ENCODE measurements at regions of chr11 and their contacts with region 1.

Region 1: DNA sequence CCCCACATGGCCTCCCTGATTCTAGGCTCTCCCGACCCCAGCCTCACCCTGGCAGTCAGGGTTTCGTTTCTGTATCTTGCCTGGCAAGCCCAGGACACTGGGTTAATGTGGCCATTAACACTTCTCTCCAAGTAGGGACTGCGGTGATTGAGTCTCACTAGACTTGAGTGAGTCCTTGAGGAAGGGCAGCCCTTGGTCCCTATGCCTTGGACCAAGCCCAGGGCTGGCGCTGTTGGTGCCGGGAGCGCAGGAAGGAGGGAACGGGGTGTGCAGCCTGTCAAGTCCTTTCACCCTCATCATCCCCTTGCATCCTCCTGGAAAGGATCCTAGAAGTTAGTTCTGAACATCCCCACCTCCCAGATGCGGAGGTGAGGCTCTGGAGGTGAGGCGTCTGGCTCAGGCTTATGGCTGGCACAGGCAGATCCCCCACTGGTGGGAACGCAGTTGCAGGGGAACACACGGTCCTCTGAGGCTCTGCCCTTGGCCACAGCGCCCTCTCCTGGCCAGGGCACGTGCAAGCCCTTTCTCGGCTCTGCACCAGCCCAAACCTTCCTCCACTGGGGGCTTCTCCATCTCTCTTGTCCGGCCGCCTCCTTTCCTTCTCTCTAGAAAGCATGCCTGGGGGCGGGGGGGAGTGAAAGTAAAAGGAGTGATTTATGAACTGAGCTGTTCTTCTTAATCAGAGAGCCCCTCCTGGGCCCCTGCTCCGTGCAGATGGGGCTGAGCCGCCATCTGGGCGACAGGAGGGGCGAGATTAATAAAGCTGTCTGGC is 56.7 kb downstream of the TP53I11 start:
- DNase-seq: peak; percentile 86
- H3K4me3 Mint-ChIP-seq: no peak overlapping the region
- H3K27ac Mint-ChIP-seq: no peak overlapping the region
- H3K4me1 Mint-ChIP-seq: no peaks in the 10 kb centered on the region
- H3K27me3 Mint-ChIP-seq: no peaks in the 10 kb centered on the region

Region 2: DNA sequence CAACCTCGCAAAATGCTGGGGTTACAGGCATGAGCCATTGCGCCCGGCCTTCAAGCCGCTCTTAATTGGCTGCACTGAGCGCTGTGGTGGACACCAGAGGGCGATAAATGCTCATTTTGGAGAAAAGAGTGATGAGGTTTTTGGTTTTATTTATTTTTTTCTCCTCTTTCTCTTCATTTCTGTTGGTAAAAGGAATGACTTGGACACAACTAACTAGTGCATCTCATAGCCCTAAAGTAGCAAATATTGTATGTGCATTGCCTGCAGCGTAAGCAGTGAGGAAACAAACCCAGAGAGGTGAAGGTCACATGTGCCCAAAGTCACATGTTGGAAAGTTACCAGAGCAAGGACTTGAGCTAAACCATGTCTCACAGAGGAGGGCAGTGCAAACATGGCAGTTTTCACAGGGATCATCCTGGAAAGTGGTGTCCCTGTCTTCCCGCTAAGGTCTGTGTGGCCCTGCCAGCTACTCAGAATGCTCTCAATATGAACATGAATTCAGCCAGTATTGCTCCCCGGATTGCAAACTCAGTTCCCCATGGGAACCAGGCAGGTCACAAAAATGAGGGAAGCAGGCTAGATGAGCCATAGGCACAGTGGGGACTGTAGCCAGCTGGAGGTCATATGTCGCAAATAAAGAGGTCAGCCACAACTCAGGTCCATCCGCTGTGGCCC is 337.2 kb before region 1 on chr11:
- intact Hi-C with region 1: loop called (anchors 5 kb)
- DNase-seq: peak; percentile 90
- H3K4me3 Mint-ChIP-seq: no peak overlapping the region
- H3K27ac Mint-ChIP-seq: peak overlapping the region; percentile 68
- H3K4me1 Mint-ChIP-seq: peaks cover 25% of the 10 kb centered on the region
- H3K27me3 Mint-ChIP-seq: peaks cover 4% of the 10 kb centered on the region

Region 3: GRCh38 chr11:44621140-44621681 is 272.8 kb before region 1 on chr11:
- intact Hi-C with region 1: loop called (anchors 5 kb)
- DNase-seq: peak; percentile 88
- H3K4me3 Mint-ChIP-seq: no peak overlapping the region
- H3K27ac Mint-ChIP-seq: no peak overlapping the region
- H3K4me1 Mint-ChIP-seq: peaks cover 27% of the 10 kb centered on the region
- H3K27me3 Mint-ChIP-seq: no peaks in the 10 kb centered on the region

Region 4: DNA sequence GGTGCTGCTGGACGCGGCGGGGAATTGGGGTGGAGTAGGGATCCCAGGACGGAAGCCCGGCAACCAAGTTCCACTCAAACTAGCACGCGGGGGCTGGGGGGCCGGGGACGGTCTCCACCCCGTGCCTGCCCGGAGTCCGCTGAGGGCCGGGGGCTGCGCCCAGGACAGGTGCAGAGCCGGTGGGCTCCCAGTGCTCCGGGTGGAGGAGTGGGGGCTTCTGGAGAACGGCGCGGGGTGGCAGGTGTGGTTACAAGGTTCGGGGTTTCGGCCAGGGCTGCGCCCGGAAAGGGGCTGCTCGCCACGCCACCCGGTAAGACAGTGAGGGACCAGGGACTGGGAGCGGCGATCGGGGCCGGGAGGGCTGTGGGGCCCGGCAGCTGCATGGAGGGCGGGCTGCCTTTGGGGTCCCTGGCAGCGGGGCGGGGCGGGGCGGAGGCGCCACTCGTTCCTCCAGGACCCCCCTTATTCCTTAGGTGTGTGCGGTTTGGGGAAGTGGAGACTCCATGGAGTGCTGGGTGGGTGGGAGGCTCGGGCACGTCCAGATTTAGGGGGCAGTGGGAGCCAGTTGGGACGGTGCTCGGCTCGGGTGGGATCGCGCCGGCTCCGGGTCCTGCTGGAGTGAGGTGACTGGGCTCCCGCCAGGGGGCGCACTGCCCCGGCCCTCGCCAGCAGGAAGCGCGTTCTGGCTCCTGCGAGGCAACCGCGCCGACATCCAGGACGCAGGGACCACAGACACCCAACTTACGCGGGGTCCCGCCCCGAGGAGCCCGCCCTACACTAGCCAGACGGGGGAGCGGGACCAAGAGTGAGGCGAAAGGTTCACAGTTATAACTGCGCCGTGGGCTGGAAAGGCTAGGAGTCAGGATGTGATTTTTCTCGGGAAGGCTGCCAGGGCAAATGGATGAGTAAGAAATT is 166.4 kb before region 1 on chr11:
- intact Hi-C with region 1: loop called (anchors 1 kb)
- DNase-seq: peak; percentile 93
- H3K4me3 Mint-ChIP-seq: peak overlapping the region; percentile 87
- H3K27ac Mint-ChIP-seq: peak overlapping the region; percentile 10
- H3K4me1 Mint-ChIP-seq: peaks cover 38% of the 10 kb centered on the region
- H3K27me3 Mint-ChIP-seq: peaks cover 41% of the 10 kb centered on the region